Ovary (tissue), 10 donors: ENCODE measurements at regions of chr6 and their contacts with region 1.

Region 1: DNA sequence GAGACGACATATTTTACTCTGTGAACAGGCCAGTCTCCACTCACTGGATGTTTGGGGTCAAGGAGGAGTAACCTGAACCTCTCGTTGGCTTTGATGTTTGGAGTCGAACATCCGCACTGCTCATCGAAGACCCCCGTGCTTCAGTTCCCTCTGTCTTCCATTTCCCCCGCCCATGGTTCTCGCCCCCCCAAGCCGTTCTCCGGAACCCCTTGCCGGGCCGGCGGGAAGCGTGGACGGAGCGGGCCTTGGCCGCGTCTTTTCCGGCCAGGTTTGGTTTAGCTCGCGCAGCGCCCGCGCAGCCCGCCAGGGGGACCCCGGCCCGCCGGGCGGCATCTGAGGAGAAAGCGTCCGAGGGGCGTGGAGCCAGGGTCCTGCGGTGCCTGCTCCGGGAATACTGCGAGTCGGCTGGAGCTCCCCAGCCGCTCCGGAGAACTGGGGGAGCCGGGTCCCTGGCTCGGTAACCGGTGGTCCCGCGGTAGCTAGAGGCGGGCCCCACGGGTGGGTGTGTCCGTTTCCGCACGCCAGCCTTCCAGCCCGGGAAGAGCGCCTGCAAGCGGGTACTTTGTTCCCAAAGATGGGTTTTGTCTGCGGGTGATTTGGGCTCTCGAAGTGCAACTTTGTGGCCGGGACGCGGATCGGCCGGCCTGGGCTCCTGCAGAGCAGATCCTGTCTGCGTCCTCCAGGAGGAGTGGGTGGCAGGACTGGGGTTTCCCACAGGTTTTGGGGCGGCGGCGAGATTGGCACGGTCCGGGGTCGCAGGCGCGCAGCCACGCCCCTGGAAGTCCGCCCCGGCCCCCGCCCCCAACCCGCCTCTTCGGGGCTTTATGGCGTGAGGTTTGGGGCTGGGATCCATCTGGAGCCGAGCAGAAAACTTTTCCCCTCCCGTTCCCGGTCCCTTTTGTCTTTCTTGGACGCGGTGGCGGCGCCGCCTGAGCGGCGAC is at the start of gene TMEM200A:
- DNase-seq: peak; percentile 81 to 93 (median 85)
- H3K4me3 ChIP-seq: peak within 1 kb of the TSS; percentile 90
- H3K27ac ChIP-seq: peak within 1 kb of the TSS; percentile 79 to 80
- H3K4me1 ChIP-seq: peaks cover 2% of the 10 kb centered on the region
- H3K27me3 ChIP-seq: no peaks in the 10 kb centered on the region
- CTCF ChIP-seq: peak; percentile 82 to 90 (median 87)
- EP300 ChIP-seq: no peak
- POLR2A ChIP-seq: peak; percentile 26
- total RNA-seq, gene TMEM200A: 8.2 to 32.5 (median 17.6) TPM

Region 2: DNA sequence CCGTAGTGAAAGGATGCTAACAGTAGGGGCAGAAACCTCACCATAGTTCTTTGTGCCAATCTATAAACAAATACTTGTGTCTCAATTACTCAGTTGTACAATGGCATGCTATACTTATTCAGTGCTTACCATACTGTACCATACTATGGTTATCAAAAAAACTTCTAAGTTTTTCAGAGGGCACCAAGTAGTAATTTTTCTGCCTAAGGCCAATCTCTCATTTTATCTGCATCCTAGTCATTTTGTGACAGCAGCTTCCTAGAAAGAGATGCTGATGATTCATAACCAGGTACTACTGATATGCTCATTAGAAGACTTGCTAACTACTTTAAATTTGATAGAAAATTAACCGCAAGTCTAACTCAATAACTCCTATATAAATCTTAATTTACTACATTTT is 547.2 kb before region 1 on chr6:
- intact Hi-C with region 1: no loop called
- DNase-seq: no peak
- H3K4me3 ChIP-seq: no peak overlapping the region
- H3K27ac ChIP-seq: no peak overlapping the region
- H3K4me1 ChIP-seq: no peaks in the 10 kb centered on the region
- H3K27me3 ChIP-seq: peaks cover 3% of the 10 kb centered on the region
- CTCF ChIP-seq: no peak
- EP300 ChIP-seq: no peak
- POLR2A ChIP-seq: no peak

Region 3: GRCh38 chr6:130252527-130253237 is 112.8 kb before region 1 on chr6:
- intact Hi-C with region 1: no loop called
- DNase-seq: no peak
- H3K4me3 ChIP-seq: no peak overlapping the region
- H3K27ac ChIP-seq: no peak overlapping the region
- H3K4me1 ChIP-seq: no peaks in the 10 kb centered on the region
- H3K27me3 ChIP-seq: no peaks in the 10 kb centered on the region
- CTCF ChIP-seq: no peak
- EP300 ChIP-seq: no peak
- POLR2A ChIP-seq: no peak

Region 4: DNA sequence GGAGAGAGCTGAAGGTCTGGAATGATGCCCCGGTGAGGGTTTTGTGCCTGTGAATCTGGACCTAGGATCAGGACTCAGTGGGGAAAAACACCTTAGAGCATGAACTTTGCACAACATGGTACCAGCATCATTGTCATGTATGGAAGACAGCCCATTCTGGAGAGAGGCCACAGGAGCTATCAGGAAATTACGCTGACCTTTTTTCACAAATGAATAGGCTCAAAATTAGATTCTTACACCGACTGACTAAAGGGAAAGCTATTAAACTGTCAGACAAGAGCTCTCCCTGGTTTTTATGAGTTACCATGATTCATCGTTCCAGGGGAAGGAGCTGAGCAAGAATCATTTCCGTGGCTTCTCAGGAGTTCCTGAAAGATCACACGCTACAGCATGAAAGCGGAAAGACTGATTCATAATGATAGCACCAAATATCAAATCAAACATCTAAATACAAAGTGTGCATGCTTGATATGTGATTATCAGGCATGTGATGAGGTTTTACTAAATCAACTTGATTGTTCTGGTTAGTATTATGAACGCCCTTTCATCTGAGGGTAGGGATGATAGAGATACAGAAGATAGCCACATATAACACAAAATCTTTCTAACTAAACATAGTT is 236.8 kb after region 1 on chr6:
- intact Hi-C with region 1: loop called in 1 of 4 experiments (anchors 10 kb)
- DNase-seq: no peak
- H3K4me3 ChIP-seq: no peak overlapping the region
- H3K27ac ChIP-seq: no peak overlapping the region
- H3K4me1 ChIP-seq: peaks cover 4% of the 10 kb centered on the region
- H3K27me3 ChIP-seq: no peaks in the 10 kb centered on the region
- CTCF ChIP-seq: no peak
- EP300 ChIP-seq: no peak
- POLR2A ChIP-seq: no peak

Region 5: DNA sequence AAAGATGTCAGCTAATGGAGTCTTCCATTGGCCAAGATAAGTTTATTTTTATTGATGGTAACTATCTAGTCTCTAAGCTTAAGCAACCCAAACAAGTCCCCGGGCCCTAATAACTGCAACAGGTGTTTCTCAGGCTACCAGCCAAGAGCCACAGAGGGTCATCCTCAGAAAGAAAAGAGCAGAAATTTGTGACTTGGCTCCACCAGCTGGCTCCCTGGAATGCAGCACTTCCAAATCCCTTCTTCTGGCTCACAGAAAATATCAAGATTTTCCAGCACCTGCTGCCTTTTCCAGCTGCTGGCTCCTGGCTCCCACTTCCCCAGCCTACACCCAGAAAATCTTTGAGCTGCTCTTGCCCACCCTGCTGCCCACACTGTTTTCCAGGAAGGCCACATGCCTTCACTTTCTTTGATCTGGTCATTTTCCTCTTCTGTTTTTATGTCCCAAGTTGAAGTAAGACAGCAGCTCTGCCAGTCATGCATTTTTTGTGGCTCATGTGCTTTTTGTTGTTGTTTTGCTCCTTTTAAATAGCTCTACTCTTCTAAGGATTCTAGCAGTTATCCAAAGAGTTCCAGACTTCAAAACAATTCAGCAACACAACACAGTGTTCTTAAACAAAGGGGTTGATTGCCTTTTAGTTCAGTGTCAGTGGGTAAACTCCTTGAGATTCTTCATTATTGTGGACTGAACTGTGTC is 310.8 kb after region 1 on chr6:
- intact Hi-C with region 1: loop called in 2 of 4 experiments (anchors 10 kb)
- DNase-seq: peak; percentile 55 to 74 (median 71)
- H3K4me3 ChIP-seq: no peak overlapping the region
- H3K27ac ChIP-seq: peak overlapping the region in 1 of 2 donors; percentile 33
- H3K4me1 ChIP-seq: peaks cover 14% of the 10 kb centered on the region
- H3K27me3 ChIP-seq: no peaks in the 10 kb centered on the region
- CTCF ChIP-seq: no peak
- EP300 ChIP-seq: no peak
- POLR2A ChIP-seq: no peak

Region 6: GRCh38 chr6:130697995-130698535 is 332.6 kb after region 1 on chr6:
- intact Hi-C with region 1: loop called in 1 of 4 experiments (anchors 5 kb)
- DNase-seq: peak in 4 of 5 donors; percentile 27 to 61 (median 42)
- H3K4me3 ChIP-seq: no peak overlapping the region
- H3K27ac ChIP-seq: no peak overlapping the region
- H3K4me1 ChIP-seq: peaks cover 3% of the 10 kb centered on the region
- H3K27me3 ChIP-seq: no peaks in the 10 kb centered on the region
- CTCF ChIP-seq: peak in 2 of 3 donors; percentile 23 to 53
- EP300 ChIP-seq: no peak
- POLR2A ChIP-seq: no peak

Region 7: DNA sequence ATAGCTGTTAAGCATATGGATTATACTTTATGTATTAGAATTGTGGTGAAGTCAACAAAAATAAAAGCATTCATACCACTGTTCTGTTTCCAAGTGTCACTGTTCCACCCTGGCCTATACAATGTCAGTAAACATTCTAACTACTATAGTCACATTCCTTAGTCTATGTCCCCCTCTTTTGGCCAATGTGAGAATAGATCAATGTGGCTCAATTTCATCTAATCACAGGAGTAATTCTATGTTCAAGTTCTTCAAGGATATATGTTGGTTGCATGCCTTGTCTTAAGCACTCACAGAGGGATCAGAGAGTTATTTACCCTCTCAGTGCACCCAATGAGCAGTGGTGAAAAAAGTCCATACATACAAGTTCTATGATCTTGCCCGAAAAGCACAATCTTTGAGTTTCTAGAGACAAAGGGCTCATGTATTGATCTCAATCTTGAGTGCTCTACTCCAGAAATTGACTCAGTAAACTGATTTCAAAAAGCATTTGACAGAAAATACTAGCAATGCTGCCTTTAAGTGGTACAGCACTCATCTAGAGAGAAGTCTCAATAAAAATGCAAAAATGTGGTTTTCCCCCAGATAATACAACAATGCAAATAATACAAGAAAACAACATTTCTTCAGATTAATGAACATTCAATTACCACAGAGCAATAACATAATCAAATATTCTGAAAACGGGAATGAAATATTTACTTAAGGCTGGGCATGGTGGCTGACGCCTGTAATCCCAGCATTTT is 478.3 kb after region 1 on chr6:
- intact Hi-C with region 1: loop called in 1 of 4 experiments (anchors 10 kb)
- DNase-seq: no peak
- H3K4me3 ChIP-seq: no peak overlapping the region
- H3K27ac ChIP-seq: no peak overlapping the region
- H3K4me1 ChIP-seq: peaks cover 7% of the 10 kb centered on the region
- H3K27me3 ChIP-seq: no peaks in the 10 kb centered on the region
- CTCF ChIP-seq: peak in 2 of 3 donors; percentile 45 to 67
- EP300 ChIP-seq: no peak
- POLR2A ChIP-seq: no peak